ENCODE measurements at regions of chr3 and their contacts with region 1.

Region 1: DNA sequence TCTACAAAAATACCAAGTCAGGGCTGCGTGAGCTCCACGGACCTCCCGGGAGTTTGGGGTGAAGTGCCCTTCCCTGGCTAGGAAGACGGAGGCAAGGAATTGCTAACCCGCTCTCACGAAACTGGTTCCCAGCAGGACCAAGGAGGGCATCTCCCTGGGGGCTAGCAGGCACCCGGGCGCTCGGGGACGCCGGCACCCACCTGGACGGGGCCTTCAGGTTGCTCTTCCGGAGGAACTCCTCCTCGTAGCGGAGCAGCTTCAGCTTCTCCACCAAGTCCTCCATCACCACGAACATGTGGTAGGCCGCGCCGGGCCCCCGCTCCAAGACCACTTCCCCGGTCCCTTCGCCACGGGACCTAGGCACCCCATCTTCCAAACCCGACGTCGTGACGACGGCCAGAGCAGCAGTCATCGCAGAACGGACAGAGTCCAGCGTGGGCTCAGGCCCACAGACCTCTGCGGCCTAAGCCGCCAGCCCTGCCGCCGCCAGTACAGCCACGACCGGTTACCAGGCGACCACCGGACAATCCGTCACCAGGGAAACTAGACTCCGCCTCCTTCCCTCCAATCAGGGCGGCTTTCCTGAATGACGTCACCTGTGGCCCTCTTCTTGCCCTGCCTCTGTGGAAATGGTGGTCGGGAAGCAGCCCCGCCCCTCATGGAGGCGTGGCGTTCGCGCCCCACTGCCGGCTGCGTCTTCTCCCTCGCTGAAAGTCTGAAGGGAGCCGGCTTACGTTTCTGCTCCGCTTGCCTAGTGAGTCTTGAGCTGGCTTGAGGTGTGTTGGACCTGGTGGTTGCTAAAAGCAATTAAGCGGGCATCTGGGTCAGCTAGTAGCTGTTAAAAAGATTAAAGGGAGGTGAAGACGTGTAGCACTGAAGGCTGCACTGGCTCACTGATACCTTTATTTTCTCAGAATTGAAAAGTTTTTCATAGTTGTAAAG is at the start of gene IFT57:
- DNase-seq: peak; percentile 94 to 99
- ATAC-seq: peak; percentile 93 to 98 (median 95)
- H3K4me3 ChIP-seq: peak within 1 kb of the TSS; percentile 86
- H3K4me3 Mint-ChIP-seq: peak within 1 kb of the TSS; percentile 97
- H3K27ac ChIP-seq: peak within 1 kb of the TSS; percentile 91
- H3K27ac Mint-ChIP-seq: peak within 1 kb of the TSS; percentile 99 to 100
- H3K4me1 ChIP-seq: peaks cover 11% of the 10 kb centered on the region
- H3K4me1 Mint-ChIP-seq: peaks cover 39 to 50% of the 10 kb centered on the region in 2 donors
- H3K27me3 ChIP-seq: no peaks in the 10 kb centered on the region
- H3K27me3 Mint-ChIP-seq: no peaks in the 10 kb centered on the region
- CTCF ChIP-seq: no peak
- total RNA-seq, gene IFT57: 22.2 to 49.3 (median 33.5) TPM

Region 2: GRCh38 chr3:107938143-107938542 is 284.0 kb before region 1 on chr3:
- intact Hi-C with region 1: loop called (anchors 10 kb)
- DNase-seq: peak in 1 of 2 donors; percentile 44
- ATAC-seq: no peak
- H3K4me3 ChIP-seq: no peak overlapping the region
- H3K4me3 Mint-ChIP-seq: no peak overlapping the region
- H3K27ac ChIP-seq: no peak overlapping the region
- H3K27ac Mint-ChIP-seq: no peak overlapping the region
- H3K4me1 ChIP-seq: peaks cover 5% of the 10 kb centered on the region
- H3K4me1 Mint-ChIP-seq: peaks cover 10 to 22% of the 10 kb centered on the region in 2 donors
- H3K27me3 ChIP-seq: no peaks in the 10 kb centered on the region
- H3K27me3 Mint-ChIP-seq: peaks cover 6 to 25% of the 10 kb centered on the region in 2 donors
- CTCF ChIP-seq: peak; percentile 28